ENCODE measurements at regions of chr9 and their contacts with region 1.

Region 1: GRCh38 chr9:109779711-109780452 is at the start of gene PALM2AKAP2:
- DNase-seq: peak; percentile 77 to 86 (median 82)
- ATAC-seq: peak; percentile 71 to 94 (median 88)
- H3K4me3 ChIP-seq: peak within 1 kb of the TSS; percentile 58 to 89 (median 78)
- H3K27ac ChIP-seq: peak within 1 kb of the TSS; percentile 38 to 94 (median 86)
- H3K4me1 ChIP-seq: peaks cover 0 to 24% (median 3%) of the 10 kb centered on the region in 12 donors
- H3K27me3 ChIP-seq: peaks cover 0 to 15% (median 0%) of the 10 kb centered on the region in 9 donors
- CTCF ChIP-seq: peak in 9 of 12 donors; percentile 12 to 53 (median 45)
- POLR2A ChIP-seq: peak in 1 of 2 donors; percentile 25
- total RNA-seq, gene PALM2AKAP2: 38.7 to 132 (median 83.9) TPM

Region 2: DNA sequence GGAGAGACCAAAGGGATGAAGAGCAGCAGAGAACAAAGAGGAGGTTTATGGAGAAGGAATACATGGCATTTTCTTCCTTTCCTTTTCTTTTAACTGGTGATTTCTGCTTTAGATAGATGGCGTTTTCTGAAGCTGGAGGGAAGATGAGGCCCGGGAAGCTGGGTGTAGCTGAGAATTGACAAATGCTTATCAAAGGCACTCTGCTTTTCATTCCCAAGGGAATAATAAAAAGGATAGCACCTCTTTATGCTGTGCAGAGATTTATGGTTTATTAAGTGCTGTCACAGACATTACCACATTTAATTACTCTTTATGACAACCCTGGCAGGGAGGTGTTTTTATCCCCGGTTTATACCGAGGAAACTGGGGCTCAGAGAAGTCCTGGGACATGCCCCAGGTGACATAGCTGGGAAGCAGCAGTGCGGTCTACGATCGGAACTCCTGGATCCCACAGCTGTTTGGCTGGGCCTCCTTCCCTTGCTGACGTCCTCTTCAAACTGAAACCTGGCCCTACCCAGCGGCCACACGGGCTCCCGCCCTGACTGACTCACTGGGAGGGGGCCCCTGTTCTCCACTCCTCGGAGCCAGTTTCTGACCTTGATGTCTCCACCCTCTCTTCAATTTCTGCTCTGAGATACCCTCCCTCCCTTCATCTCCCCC is 450.8 kb before region 1 on chr9:
- intact Hi-C with region 1: no loop called
- DNase-seq: peak in 2 of 5 donors; percentile 44 to 50
- ATAC-seq: peak in 3 of 4 donors; percentile 58 to 71 (median 60)
- H3K4me3 ChIP-seq: peak overlapping the region in 2 of 12 donors; percentile 4 to 30
- H3K27ac ChIP-seq: peak overlapping the region in 2 of 12 donors; percentile 53 to 54
- H3K4me1 ChIP-seq: peaks cover 0 to 26% (median 4%) of the 10 kb centered on the region in 12 donors
- H3K27me3 ChIP-seq: peaks cover 0 to 6% (median 0%) of the 10 kb centered on the region in 9 donors
- CTCF ChIP-seq: no peak
- POLR2A ChIP-seq: no peak

Region 3: GRCh38 chr9:109705515-109705914 is 74.4 kb before region 1 on chr9:
- intact Hi-C with region 1: loop called in 4 of 10 experiments (anchors 5 to 10 kb)
- DNase-seq: no peak
- ATAC-seq: peak in 1 of 4 donors; percentile 38
- H3K4me3 ChIP-seq: no peak overlapping the region
- H3K27ac ChIP-seq: no peak overlapping the region
- H3K4me1 ChIP-seq: peaks cover 0 to 38% (median 19%) of the 10 kb centered on the region in 12 donors
- H3K27me3 ChIP-seq: no peaks in the 10 kb centered on the region
- CTCF ChIP-seq: peak in 1 of 12 donors; percentile 8
- POLR2A ChIP-seq: no peak

Region 4: GRCh38 chr9:109817846-109818472 is 38.1 kb after region 1 on chr9:
- intact Hi-C with region 1: loop called in 5 of 10 experiments (anchors 1 to 5 kb)
- DNase-seq: peak in 4 of 5 donors; percentile 71 to 86 (median 80)
- ATAC-seq: peak; percentile 74 to 82 (median 78)
- H3K4me3 ChIP-seq: peak overlapping the region in 4 of 12 donors; percentile 14 to 20 (median 20)
- H3K27ac ChIP-seq: peak overlapping the region in 11 of 12 donors; percentile 15 to 81 (median 70)
- H3K4me1 ChIP-seq: peaks cover 0 to 41% (median 21%) of the 10 kb centered on the region in 12 donors
- H3K27me3 ChIP-seq: no peaks in the 10 kb centered on the region
- CTCF ChIP-seq: peak; percentile 78 to 92 (median 82)
- POLR2A ChIP-seq: no peak

Region 5: DNA sequence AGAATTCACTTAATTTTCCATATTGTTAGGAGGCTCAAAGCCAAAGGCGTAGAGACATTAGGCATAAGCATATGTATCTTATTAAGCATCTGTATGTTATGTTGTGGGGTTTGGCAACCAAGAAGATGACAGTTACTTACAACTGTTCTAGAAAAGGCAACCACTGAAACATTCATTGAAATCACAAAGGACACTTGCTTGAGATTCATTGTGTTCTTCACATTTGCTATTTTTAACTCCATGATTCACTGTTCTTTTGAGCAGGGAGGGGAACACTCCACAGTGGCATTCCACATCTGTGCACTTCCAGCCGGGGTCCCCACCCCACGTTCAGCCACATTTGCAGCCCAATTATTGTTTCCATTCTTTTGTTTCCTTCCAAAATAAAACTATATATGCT is 107.2 kb after region 1 on chr9:
- intact Hi-C with region 1: loop called in 3 of 10 experiments (anchors 5 to 10 kb)
- DNase-seq: peak in 2 of 5 donors; percentile 36 to 54
- ATAC-seq: peak; percentile 77 to 88 (median 86)
- H3K4me3 ChIP-seq: no peak overlapping the region
- H3K27ac ChIP-seq: peak overlapping the region; percentile 35 to 87 (median 75)
- H3K4me1 ChIP-seq: peaks cover 2 to 61% (median 38%) of the 10 kb centered on the region in 12 donors
- H3K27me3 ChIP-seq: no peaks in the 10 kb centered on the region
- CTCF ChIP-seq: no peak
- POLR2A ChIP-seq: no peak